Right ventricle myocardium inferior (tissue), 1 donor: ENCODE measurements at regions of chr7 and their contacts with region 1.

Region 1: DNA sequence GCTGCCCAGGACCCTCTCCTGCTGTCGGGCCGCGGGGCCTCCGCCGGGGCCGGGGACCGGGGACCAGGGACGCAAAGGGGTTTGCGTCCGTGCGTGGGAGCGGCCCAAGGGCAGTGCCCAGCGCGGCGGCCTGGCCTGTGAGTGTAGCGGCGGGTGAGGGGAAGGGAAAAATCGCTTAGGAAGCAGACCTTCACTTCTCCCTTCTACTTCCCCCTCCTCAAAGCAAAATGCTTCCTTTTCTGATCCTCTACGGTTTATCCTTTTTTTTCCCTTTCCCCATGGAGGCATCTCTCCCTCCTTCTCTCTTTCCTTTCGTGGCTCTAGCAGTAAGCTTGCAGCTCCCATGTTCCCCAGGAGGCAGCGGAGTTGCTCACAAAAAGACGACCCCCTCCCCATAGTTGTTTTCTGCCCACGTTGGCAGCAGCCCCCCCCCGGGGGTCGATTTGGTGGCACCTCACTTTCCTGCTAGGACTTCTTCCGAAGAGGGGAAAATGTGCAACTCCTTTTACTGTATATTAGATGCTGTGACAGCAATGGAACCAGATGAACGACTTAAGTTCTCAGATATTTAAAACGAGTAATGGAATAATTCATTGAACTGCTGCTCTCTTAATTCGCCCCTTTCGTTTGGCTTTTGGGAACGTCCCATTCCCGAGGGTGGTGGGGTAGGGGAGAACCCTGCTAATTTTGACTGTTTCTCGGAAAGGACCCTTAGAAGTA is 724 bp downstream of the CAPZA2 start:
- DNase-seq: no peak
- ATAC-seq: no peak

Region 2: GRCh38 chr7:116953727-116954442 is 90.8 kb after region 1 on chr7:
- intact Hi-C with region 1: loop called (anchors 1 kb)
- DNase-seq: peak; percentile 74
- ATAC-seq: peak; percentile 56